ENCODE measurements at regions of chr19 and their contacts with region 1.

Region 1: DNA sequence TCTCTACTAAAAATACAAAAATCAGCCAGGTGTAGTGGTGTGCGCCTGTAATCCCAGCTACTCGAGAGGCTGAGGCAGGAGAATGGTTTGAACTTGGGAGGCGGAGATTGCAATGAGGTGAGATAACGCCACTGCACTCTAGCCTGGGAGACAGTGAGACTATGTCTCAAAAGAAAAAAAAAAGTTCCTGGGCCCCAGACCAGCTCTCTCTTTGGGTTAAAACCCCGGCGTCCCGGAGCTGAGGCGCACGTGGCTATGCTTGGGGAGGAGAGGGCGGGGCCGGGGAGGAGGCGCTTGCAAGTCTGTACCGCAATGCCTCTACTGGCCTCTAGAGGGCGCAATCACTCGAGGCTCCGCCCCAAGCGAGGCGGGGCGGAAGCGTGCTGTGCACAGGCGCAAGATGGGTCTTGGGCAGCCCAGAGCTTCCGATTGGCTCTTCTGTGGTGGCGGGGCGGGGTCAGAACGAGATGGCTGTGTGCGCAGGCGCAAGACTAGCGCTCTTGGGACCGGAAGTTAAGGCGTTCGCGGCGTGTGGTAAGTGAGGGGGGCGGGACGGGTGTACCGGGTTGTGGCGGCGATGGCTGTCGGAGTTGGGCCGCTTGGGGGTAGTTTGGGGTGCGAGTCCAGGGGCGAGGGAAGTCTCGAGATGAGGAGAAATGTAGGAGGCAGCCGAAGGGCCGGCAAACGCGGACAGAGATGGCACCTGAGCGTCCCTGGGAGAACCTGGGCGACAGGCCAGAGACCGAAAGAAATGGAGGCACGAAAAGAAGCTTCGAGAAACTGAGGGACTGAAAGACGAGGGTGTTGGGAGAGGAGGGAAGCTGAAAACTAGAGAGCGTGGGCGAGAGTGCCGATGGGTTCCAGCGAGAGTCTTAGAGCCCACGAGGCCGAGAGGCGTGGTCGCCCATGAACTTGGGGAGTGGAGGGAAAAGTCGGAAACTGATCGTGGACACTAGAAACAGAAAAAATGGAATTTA is at the start of gene DHX34:
- DNase-seq: peak; percentile 99
- ATAC-seq: peak; percentile 98
- H3K4me3 Mint-ChIP-seq: peak within 1 kb of the TSS; percentile 92
- H3K27ac Mint-ChIP-seq: peak within 1 kb of the TSS; percentile 94
- H3K4me1 Mint-ChIP-seq: peaks cover 35% of the 10 kb centered on the region
- H3K27me3 Mint-ChIP-seq: no peaks in the 10 kb centered on the region
- total RNA-seq, gene DHX34: 15.4 to 17.9 TPM

Region 2: GRCh38 chr19:47225746-47226425 is 123.2 kb before region 1 on chr19:
- CTCF ChIA-PET with region 1: no interaction called
- POLR2A ChIA-PET with region 1: no interaction called
- intact Hi-C with region 1: loop called in 1 of 2 experiments (anchors 1 kb)
- DNase-seq: peak; percentile 93
- ATAC-seq: peak; percentile 70
- H3K4me3 Mint-ChIP-seq: peak overlapping the region; percentile 77
- H3K27ac Mint-ChIP-seq: no peak overlapping the region
- H3K4me1 Mint-ChIP-seq: peaks cover 16% of the 10 kb centered on the region
- H3K27me3 Mint-ChIP-seq: no peaks in the 10 kb centered on the region

Region 3: GRCh38 chr19:47428177-47428894 is 79.2 kb after region 1 on chr19:
- CTCF ChIA-PET with region 1: interaction called, 16 read pairs
- POLR2A ChIA-PET with region 1: no interaction called
- intact Hi-C with region 1: loop called in 1 of 2 experiments (anchors 1 kb)
- DNase-seq: peak; percentile 94
- ATAC-seq: peak; percentile 75
- H3K4me3 Mint-ChIP-seq: no peak overlapping the region
- H3K27ac Mint-ChIP-seq: no peak overlapping the region
- H3K4me1 Mint-ChIP-seq: peaks cover 13% of the 10 kb centered on the region
- H3K27me3 Mint-ChIP-seq: peaks cover 39% of the 10 kb centered on the region

Region 4: DNA sequence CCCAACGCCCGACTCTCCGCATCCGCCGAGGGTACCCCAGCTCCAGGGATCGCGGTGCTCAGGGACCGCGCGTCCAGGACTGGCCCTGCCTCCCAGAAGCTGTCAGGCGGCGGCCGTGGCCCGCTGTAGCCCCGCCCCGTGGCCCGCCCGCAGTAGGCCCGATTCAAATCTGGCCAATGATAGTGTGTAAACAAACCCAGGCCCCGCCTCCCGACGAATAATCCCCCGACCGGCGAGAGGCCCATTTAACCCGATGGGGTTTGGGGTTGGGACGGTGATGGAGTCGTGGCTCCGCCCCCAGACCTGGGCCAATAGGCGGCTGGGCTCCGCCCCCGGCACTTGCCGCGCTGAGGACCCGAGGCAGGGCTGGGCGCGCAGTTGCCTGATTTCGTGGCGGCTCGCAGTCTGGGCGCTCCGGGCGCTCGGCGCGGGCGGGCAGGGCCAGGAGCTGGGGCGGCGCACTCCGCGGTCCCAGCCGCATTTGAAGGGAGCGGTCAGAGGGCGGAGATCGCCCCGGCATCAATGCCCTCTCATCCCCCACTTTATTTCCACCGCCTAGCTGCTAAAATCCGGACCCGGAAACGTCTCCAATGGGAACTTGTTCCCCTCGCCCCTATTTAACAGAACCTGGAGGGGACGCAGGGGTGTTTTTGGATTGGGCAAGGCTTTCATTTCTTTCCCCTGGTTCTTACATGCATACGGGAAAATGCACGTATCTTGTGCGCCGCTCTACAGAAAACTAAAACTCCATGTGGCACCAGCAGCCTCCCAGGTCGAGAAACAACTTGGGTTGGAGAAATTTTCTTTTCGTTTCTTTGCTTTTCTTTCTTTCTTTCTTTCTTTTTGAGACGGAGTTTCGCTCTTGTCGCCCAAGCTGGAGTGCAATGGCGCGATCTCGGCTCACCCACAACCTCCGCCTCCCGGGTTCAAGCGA is 251.4 kb after region 1 on chr19:
- CTCF ChIA-PET with region 1: no interaction called
- POLR2A ChIA-PET with region 1: no interaction called
- intact Hi-C with region 1: loop called (anchors 1 to 10 kb)
- DNase-seq: peak; percentile 100
- ATAC-seq: peak; percentile 98
- H3K4me3 Mint-ChIP-seq: peak overlapping the region; percentile 79
- H3K27ac Mint-ChIP-seq: peak overlapping the region; percentile 89
- H3K4me1 Mint-ChIP-seq: peaks cover 31% of the 10 kb centered on the region
- H3K27me3 Mint-ChIP-seq: no peaks in the 10 kb centered on the region

Region 5: DNA sequence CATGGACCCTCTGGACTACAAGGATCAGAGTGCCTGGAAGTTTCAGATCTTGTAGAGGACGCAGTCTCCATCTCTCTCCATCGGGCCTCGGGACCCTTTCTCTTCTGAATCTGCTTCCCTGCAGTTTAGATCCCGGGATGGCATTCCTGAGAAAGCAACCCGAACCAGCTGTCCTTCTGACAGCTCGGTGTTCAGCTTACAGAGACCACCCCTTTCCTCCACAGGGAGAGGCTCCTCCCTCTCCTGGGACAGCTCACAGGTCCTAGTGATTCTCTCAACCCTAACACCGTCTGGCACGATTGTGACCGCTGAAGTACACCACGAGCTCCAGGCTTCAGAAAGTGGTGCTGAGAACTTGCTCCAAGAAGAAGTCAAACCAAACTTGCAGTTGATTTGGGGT is 490.8 kb after region 1 on chr19:
- CTCF ChIA-PET with region 1: no interaction called
- POLR2A ChIA-PET with region 1: no interaction called
- intact Hi-C with region 1: no loop called
- DNase-seq: no peak
- ATAC-seq: no peak
- H3K4me3 Mint-ChIP-seq: no peak overlapping the region
- H3K27ac Mint-ChIP-seq: no peak overlapping the region
- H3K4me1 Mint-ChIP-seq: no peaks in the 10 kb centered on the region
- H3K27me3 Mint-ChIP-seq: peaks cover 9% of the 10 kb centered on the region

Region 6: GRCh38 chr19:48170038-48170812 is 821.1 kb after region 1 on chr19 and contains the starts of genes LIG1 and ZSWIM9:
- CTCF ChIA-PET with region 1: no interaction called
- POLR2A ChIA-PET with region 1: no interaction called
- intact Hi-C with region 1: loop called in 1 of 2 experiments (anchors 1 kb)
- DNase-seq: peak; percentile 96
- ATAC-seq: peak; percentile 90
- H3K4me3 Mint-ChIP-seq: peak within 1 kb of the TSS; percentile 79
- H3K27ac Mint-ChIP-seq: peak within 1 kb of the TSS; percentile 95
- H3K4me1 Mint-ChIP-seq: peaks cover 30% of the 10 kb centered on the region
- H3K27me3 Mint-ChIP-seq: no peaks in the 10 kb centered on the region
- total RNA-seq, gene LIG1: 193 to 194 TPM
- total RNA-seq, gene ZSWIM9: 7.4 to 10.9 TPM